BJ (cell line): ENCODE measurements at regions of chr1 and their contacts with region 1.

Region 1: GRCh38 chr1:12220890-12221289 is 8.9 kb upstream of the VPS13D start:
- DNase-seq: no peak
- H3K4me3 ChIP-seq: no peak overlapping the region
- H3K27me3 ChIP-seq: peaks cover 4% of the 10 kb centered on the region
- CTCF ChIP-seq: no peak

Region 2: GRCh38 chr1:12208764-12209494 is 12.0 kb before region 1 on chr1:
- CTCF ChIA-PET with region 1: interaction called, 19 read pairs
- POLR2A ChIA-PET with region 1: no interaction called
- DNase-seq: no peak
- H3K4me3 ChIP-seq: no peak overlapping the region
- H3K27me3 ChIP-seq: no peaks in the 10 kb centered on the region; the same call in 1 of the 2 replicates
- CTCF ChIP-seq: peak; percentile 86